ENCODE measurements at regions of chr3 and their contacts with region 1.

Region 1: DNA sequence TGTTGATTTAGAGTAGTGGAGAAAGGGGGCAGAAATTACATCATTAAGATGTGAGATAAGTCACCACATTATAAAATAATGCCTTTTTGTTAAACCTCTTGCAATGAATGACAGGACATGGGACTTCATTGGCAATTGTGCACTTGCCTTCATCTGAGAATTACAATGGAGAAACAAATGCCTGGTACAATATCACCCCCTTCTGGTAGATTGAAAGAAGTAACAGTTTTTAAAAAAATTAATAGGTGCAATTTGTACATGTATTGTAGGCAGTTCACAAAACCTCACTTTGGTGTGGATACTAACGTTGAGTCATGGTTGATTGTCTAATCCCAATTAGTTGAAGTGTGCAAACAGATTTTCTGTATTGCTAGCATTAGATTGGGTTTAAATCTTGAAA is 4.6 kb upstream of the P2RY14 start:
- DNase-seq: no peak
- H3K4me3 ChIP-seq: no peak overlapping the region
- H3K27ac ChIP-seq: no peak overlapping the region
- H3K27me3 ChIP-seq: no peaks in the 10 kb centered on the region
- CTCF ChIP-seq: peak; percentile 65

Region 2: GRCh38 chr3:151156618-151157216 is 126.2 kb before region 1 on chr3:
- CTCF ChIA-PET with region 1: interaction called, 23 read pairs
- POLR2A ChIA-PET with region 1: no interaction called
- DNase-seq: peak; percentile 23
- H3K4me3 ChIP-seq: no peak overlapping the region
- H3K27ac ChIP-seq: no peak overlapping the region
- H3K27me3 ChIP-seq: no peaks in the 10 kb centered on the region
- CTCF ChIP-seq: peak; percentile 63

Region 3: DNA sequence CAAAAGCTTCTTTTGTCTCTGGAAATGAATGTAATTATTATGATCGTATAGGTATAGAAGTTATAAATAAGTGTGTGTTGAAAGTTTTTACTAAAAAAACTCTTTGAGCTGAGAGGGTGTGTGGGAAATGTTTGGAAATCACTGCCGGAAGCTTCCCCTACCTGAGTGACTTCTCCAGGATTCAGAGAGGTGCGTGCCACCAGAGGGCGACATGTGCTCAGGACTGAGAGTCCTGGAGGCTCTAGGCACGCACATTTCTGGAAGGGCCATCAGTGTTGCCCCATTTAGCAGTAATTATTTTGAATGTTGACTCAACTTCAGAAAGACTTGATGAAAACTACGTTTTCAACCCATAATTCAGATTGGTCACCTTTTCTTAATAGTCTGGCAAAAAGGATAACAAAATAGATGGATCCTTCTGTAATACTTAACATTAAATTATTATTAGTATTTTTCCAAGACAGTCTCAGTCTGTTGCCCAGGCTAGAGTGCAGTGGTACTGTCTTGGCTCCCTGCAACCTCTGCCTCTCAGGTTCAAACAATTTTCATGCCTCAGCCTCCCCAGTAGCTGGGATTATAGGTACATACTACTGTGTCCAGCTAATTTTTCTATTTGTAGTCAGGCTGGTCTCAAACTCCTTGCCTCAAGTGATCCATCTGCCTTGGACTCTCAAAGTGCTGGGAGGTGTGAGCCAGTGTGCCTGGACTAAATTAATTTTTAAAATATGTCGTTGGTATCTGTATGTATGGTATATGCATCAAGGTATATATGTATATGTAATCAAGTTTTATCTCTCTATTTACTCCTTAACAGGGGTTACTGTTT is 114.4 kb before region 1 on chr3:
- CTCF ChIA-PET with region 1: interaction called, 75 read pairs
- POLR2A ChIA-PET with region 1: no interaction called
- DNase-seq: peak; percentile 18
- H3K4me3 ChIP-seq: no peak overlapping the region
- H3K27ac ChIP-seq: no peak overlapping the region
- H3K27me3 ChIP-seq: no peaks in the 10 kb centered on the region
- CTCF ChIP-seq: peak; percentile 86

Region 4: GRCh38 chr3:151236736-151237135 is 46.2 kb before region 1 on chr3:
- CTCF ChIA-PET with region 1: interaction called, 28 read pairs
- POLR2A ChIA-PET with region 1: no interaction called
- DNase-seq: no peak
- H3K4me3 ChIP-seq: no peak overlapping the region
- H3K27ac ChIP-seq: no peak overlapping the region
- H3K27me3 ChIP-seq: no peaks in the 10 kb centered on the region
- CTCF ChIP-seq: no peak

Region 5: GRCh38 chr3:151259664-151260063 is 23.3 kb before region 1 on chr3:
- CTCF ChIA-PET with region 1: interaction called, 10 read pairs
- POLR2A ChIA-PET with region 1: no interaction called
- DNase-seq: peak; percentile 10
- H3K4me3 ChIP-seq: no peak overlapping the region
- H3K27ac ChIP-seq: no peak overlapping the region
- H3K27me3 ChIP-seq: peaks cover 2% of the 10 kb centered on the region
- CTCF ChIP-seq: no peak

Region 6: GRCh38 chr3:151265866-151266265 is 17.1 kb before region 1 on chr3:
- CTCF ChIA-PET with region 1: interaction called, 13 read pairs
- POLR2A ChIA-PET with region 1: interaction called, 3 read pairs
- DNase-seq: no peak
- H3K4me3 ChIP-seq: no peak overlapping the region
- H3K27ac ChIP-seq: no peak overlapping the region
- H3K27me3 ChIP-seq: no peaks in the 10 kb centered on the region
- CTCF ChIP-seq: no peak

Region 7: GRCh38 chr3:151520105-151520504 is 237.2 kb after region 1 on chr3:
- CTCF ChIA-PET with region 1: no interaction called
- POLR2A ChIA-PET with region 1: no interaction called
- DNase-seq: no peak
- H3K4me3 ChIP-seq: no peak overlapping the region
- H3K27ac ChIP-seq: no peak overlapping the region
- H3K27me3 ChIP-seq: no peaks in the 10 kb centered on the region
- CTCF ChIP-seq: no peak